Common myeloid progenitor, CD34-positive (primary cell): ENCODE measurements at regions of chr9 and their contacts with region 1.

Region 1: DNA sequence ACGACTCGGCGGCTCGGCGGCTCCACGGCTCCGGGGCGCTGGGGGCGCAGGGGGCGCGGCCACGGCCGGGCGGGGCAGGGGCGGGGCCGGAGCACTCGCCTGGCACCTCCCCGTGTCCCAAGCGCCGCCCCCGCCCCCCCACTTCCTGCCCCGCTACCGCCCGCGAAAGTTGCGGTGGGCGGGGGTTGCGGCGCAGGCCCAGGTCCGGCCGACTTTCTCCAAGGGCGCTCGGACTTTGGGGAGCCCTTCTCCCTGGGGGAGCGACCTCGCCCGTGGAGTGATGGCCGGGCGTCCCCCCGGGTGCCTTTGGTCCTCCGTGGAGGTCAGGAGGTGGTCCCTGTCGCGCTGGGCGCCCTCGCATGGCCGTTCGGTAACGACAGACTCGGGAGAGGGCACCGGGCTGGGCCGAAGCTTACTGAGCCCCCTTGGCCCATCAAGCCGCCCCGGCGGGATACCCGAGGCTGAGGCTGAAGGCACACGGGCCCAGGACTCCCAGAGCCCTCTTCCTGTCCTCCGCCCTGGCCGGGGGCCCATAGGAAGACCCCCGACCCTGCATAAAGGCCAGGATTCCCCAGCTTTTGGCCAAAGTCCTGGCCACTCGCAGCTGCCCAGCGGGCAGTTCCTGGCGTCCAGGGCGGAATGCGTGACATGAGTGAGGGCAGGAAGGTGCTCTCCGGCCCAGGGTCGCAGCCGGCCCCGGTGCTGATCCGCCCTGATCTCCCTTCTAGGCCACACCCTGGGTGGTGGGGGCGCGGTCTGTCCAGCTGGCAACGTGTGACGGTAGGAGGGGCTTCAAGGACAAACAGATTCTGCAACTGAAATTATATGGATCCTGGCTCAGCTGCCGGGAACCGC is 883 bp upstream of the VAV2 start:
- DNase-seq: peak in 2 of 3 donors; percentile 51 to 61
- H3K4me3 ChIP-seq: peak overlapping the region; percentile 41 to 78 (median 67)
- H3K27ac ChIP-seq: no peak overlapping the region
- H3K4me1 ChIP-seq: peaks cover 0 to 32% (median 30%) of the 10 kb centered on the region in 4 experiments
- H3K27me3 ChIP-seq: peaks cover 0 to 59% (median 31%) of the 10 kb centered on the region in 5 experiments

Region 2: GRCh38 chr9:133773889-133774655 is 218.9 kb before region 1 on chr9:
- CTCF ChIA-PET with region 1: interaction called, 143 read pairs
- POLR2A ChIA-PET with region 1: no interaction called
- DNase-seq: no peak
- H3K4me3 ChIP-seq: no peak overlapping the region
- H3K27ac ChIP-seq: no peak overlapping the region
- H3K4me1 ChIP-seq: peaks cover 0 to 2% (median 0%) of the 10 kb centered on the region in 4 experiments
- H3K27me3 ChIP-seq: no peaks in the 10 kb centered on the region

Region 3: DNA sequence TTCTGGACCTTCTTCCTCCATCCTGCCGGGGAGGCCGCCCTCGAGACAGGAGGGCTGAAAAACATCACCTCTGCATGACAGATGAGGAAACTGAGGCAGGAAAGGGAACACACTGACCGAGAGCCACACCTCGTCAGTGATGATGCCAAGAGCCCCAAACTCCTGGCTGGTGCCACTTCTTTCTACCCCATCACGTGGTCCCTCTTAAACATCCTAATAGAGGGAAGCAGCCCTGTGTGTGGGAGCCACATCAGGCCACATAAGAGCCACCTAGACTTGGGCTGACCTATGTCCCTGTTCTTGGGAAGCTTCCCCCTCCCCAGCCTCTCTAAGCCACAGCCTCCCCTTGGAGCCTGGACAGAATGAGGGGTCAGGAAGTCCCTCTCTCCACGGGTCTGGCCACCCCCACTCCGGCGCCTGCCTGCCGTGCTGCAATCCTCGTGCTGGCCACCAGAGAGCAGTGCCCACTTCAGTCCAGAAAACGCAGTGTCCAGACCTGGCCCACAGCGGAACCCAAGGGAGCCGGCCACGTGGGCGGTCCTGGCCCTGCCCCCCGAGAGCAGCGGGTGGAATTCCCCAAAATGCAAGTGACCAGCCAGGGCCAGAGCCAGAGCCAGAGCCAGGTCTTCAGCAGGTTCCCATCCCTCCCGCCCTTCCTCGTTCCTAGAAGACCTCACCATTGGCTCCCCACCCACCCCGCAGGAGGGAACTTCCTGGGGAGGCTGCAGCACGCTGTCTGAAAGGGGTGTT is 200.1 kb before region 1 on chr9:
- CTCF ChIA-PET with region 1: interaction called, 93 read pairs
- POLR2A ChIA-PET with region 1: no interaction called
- DNase-seq: peak in 2 of 3 donors; percentile 46 to 48
- H3K4me3 ChIP-seq: peak overlapping the region in 4 of 7 experiments; percentile 14 to 57 (median 39)
- H3K27ac ChIP-seq: no peak overlapping the region
- H3K4me1 ChIP-seq: peaks cover 0 to 32% (median 29%) of the 10 kb centered on the region in 4 experiments
- H3K27me3 ChIP-seq: peaks cover 0 to 10% (median 2%) of the 10 kb centered on the region in 5 experiments

Region 4: DNA sequence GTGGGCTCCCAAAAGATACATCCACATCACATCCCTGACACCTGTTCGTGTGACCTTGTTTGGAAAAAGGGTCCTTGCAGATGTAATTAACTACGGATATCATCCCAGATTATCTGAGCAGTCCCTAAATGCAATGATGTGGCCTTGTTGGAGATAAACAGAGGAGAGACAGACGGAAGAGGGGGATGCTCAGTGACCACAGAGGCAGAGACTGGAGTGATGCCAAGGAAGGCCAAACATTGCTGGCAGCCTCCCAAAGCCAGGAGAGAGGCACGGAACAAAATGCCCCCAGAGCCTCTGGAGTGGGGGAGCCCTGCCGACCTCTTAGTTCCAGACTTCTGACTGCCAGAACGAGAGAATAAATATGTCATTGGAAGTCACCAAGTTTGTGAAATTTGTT is 14.1 kb after region 1 on chr9:
- CTCF ChIA-PET with region 1: interaction called, 19 read pairs
- POLR2A ChIA-PET with region 1: no interaction called
- DNase-seq: peak in 2 of 3 donors; percentile 31 to 46
- H3K4me3 ChIP-seq: no peak overlapping the region
- H3K27ac ChIP-seq: no peak overlapping the region
- H3K4me1 ChIP-seq: peaks cover 0 to 38% (median 16%) of the 10 kb centered on the region in 4 experiments
- H3K27me3 ChIP-seq: no peaks in the 10 kb centered on the region